WTC11 (cell line): ENCODE measurements at regions of chr6 and their contacts with region 1.

Region 1: GRCh38 chr6:117795248-117795647 is 111.8 kb upstream of the SLC35F1 start:
- DNase-seq: no peak
- ATAC-seq: peak; percentile 76
- H3K4me3 Mint-ChIP-seq: no peak overlapping the region
- H3K27ac Mint-ChIP-seq: 0 out of 2 replicates have a peak overlapping the region, but pooled peaks have one; percentile 48
- H3K4me1 Mint-ChIP-seq: peaks cover 33% of the 10 kb centered on the region
- H3K27me3 Mint-ChIP-seq: no peaks in the 10 kb centered on the region
- CTCF ChIP-seq: no peak

Region 2: DNA sequence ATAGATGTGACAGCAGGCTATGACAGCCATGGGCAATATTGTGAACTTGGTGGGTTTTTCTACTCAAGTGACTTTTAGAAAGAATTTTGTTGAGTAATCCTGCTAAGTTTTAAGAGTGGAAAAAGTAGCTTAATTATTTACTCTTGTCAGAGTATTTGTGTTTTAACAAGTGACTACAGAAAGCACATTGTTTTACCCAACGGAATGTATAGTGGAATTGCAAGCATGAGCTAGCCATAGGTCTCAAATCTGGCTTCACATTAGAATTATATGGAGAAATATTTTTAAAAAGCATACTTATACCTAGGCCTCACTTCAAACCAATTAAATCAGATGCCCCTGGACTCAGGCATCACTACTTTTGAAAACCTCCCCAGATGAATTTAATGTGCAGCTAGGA is 157.5 kb before region 1 on chr6:
- CTCF ChIA-PET with region 1: no interaction called
- POLR2A ChIA-PET with region 1: no interaction called
- DNase-seq: no peak
- ATAC-seq: no peak
- H3K4me3 Mint-ChIP-seq: no peak overlapping the region
- H3K27ac Mint-ChIP-seq: no peak overlapping the region
- H3K4me1 Mint-ChIP-seq: no peaks in the 10 kb centered on the region
- H3K27me3 Mint-ChIP-seq: no peaks in the 10 kb centered on the region; the same call in 1 of the 2 replicates
- CTCF ChIP-seq: no peak

Region 3: GRCh38 chr6:117776441-117776840 is 18.8 kb before region 1 on chr6:
- CTCF ChIA-PET with region 1: interaction called, 16 read pairs
- POLR2A ChIA-PET with region 1: no interaction called
- DNase-seq: no peak
- ATAC-seq: peak; percentile 94
- H3K4me3 Mint-ChIP-seq: no peak overlapping the region
- H3K27ac Mint-ChIP-seq: no peak overlapping the region
- H3K4me1 Mint-ChIP-seq: peaks cover 22% of the 10 kb centered on the region
- H3K27me3 Mint-ChIP-seq: 0 out of 2 replicates have a peak, but pooled peaks cover 3% of the 10 kb centered on the region
- CTCF ChIP-seq: no peak